Caco-2 (cell line): ENCODE measurements at regions of chr10 and their contacts with region 1.

Region 1: GRCh38 chr10:13276749-13277365 is 23.0 kb downstream of the PHYH start:
- DNase-seq: no peak
- H3K4me3 ChIP-seq: no peak overlapping the region
- H3K4me3 Mint-ChIP-seq: no peak overlapping the region
- H3K27ac Mint-ChIP-seq: no peak overlapping the region
- H3K4me1 ChIP-seq: no peaks in the 10 kb centered on the region
- H3K4me1 Mint-ChIP-seq: no peaks in the 10 kb centered on the region
- H3K27me3 ChIP-seq: no peaks in the 10 kb centered on the region
- H3K27me3 Mint-ChIP-seq: no peaks in the 10 kb centered on the region
- CTCF ChIP-seq: peak in 1 of 2 experiments; percentile 6

Region 2: DNA sequence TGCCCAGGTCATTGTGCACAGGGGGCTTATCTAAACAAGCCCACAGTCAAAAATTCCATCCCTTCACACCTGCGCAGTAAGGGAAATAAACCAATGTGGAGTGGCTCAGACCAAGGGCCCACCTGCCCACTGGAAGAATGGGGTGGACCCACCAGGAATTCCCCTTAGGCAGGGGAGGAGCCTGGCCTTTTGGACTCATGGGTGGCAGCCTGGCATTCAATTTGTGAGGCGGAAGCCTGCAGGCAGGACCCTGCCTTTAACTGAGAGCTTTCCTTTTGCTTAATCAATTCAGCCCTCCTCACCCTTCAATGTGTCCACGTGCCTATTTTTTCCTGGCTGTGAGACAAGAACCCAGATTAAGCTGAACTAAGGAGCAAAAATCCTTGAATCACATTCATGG is 1602.4 kb before region 1 on chr10:
- CTCF ChIA-PET with region 1: no interaction called
- POLR2A ChIA-PET with region 1: interaction called, 11 read pairs
- intact Hi-C with region 1: no loop called
- DNase-seq: no peak
- H3K4me3 ChIP-seq: no peak overlapping the region
- H3K4me3 Mint-ChIP-seq: no peak overlapping the region
- H3K27ac Mint-ChIP-seq: no peak overlapping the region
- H3K4me1 ChIP-seq: no peaks in the 10 kb centered on the region
- H3K4me1 Mint-ChIP-seq: peaks cover 6% of the 10 kb centered on the region
- H3K27me3 ChIP-seq: no peaks in the 10 kb centered on the region
- H3K27me3 Mint-ChIP-seq: no peaks in the 10 kb centered on the region
- CTCF ChIP-seq: no peak

Region 3: DNA sequence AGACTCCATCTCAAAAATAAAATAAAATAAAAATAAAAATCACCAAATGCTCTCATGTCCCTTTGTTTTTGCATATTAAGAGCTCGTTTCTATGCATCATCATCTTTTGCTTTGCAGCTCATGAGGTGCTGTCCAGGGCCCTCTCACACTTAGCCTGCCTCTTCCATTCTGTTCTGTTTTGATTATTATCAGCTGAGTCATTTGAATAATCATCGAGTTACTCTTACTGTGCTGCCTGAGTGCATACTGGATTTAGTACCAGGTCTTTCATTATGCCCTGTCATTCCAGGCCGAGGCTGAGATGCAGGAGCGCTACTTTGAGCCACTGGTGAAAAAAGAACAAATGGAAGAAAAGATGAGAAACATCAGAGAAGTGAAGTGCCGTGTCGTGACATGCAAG is 75.7 kb before region 1 on chr10:
- CTCF ChIA-PET with region 1: no interaction called
- POLR2A ChIA-PET with region 1: no interaction called
- intact Hi-C with region 1: no loop called
- DNase-seq: no peak
- H3K4me3 ChIP-seq: no peak overlapping the region
- H3K4me3 Mint-ChIP-seq: no peak overlapping the region
- H3K27ac Mint-ChIP-seq: no peak overlapping the region
- H3K4me1 ChIP-seq: no peaks in the 10 kb centered on the region
- H3K4me1 Mint-ChIP-seq: no peaks in the 10 kb centered on the region
- H3K27me3 ChIP-seq: no peaks in the 10 kb centered on the region
- H3K27me3 Mint-ChIP-seq: no peaks in the 10 kb centered on the region
- CTCF ChIP-seq: no peak